ENCODE measurements at regions of chr5 and their contacts with region 1.

Region 1: DNA sequence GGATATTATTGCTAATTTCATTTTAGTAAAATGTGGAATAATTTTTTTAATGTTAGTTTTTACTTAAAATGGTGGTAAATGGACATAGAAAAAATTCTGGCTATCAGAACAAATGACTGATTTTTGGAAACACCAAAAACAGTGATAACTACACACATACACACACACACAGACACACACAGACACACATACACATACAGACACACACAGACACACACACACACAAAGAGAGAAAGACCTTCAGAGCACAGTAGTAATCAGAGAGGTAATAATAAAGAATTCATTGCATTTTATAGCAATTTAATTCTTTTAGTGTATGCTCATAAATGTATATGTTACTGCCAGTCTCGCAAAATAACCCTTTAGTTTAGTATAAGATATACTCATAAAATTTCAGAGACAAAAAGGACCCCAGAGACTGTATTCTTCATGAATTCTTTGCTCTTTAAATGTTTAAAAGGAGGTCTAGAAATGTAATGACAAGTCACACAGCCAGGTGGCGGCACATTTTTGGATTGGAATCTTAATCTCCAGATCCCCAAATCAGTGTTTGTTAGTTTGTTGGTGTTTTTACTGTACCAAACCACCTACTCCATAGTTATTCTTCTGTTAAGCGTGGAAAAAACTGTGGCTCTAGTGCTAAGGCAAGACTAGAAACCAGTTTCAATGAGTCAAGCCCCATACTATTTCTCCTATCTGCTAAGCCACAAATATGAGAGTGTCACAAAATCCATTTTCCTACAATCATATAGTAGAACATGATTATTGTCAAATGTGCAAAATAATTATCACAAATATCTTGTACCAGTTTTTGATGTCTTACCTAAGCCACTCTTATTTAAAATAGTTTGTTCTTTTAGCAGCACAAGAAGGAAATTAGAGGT is 109.9 kb downstream of the EDIL3 start:
- DNase-seq: peak; percentile 50
- H3K4me3 Mint-ChIP-seq: no peak overlapping the region
- H3K27ac Mint-ChIP-seq: no peak overlapping the region
- H3K4me1 Mint-ChIP-seq: no peaks in the 10 kb centered on the region
- H3K27me3 Mint-ChIP-seq: peaks cover 78% of the 10 kb centered on the region
- CTCF ChIP-seq: peak; percentile 58

Region 2: DNA sequence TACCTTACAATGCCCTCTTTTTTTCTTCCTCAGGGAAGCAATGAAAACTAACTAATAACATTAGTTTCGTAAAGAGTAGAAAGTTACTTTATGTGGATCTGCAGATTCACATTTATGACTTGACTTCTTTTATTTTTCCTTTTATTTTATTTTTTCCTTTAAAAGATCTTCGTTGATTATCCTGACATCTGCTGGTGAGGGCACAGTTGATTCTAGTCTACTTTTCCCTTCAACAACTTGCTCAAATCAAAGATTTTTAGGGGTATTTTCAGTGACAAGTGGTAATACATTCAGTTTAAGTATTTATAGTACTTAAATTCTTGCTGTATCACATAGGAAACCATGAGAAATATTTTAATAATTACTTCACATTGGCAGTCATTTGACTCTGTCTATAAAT is 104.9 kb after region 1 on chr5:
- CTCF ChIA-PET with region 1: no interaction called
- POLR2A ChIA-PET with region 1: no interaction called
- intact Hi-C with region 1: loop called (anchors 2 kb)
- DNase-seq: no peak
- H3K4me3 Mint-ChIP-seq: no peak overlapping the region
- H3K27ac Mint-ChIP-seq: no peak overlapping the region
- H3K4me1 Mint-ChIP-seq: peaks cover 17% of the 10 kb centered on the region
- H3K27me3 Mint-ChIP-seq: peaks cover 82% of the 10 kb centered on the region
- CTCF ChIP-seq: no peak

Region 3: DNA sequence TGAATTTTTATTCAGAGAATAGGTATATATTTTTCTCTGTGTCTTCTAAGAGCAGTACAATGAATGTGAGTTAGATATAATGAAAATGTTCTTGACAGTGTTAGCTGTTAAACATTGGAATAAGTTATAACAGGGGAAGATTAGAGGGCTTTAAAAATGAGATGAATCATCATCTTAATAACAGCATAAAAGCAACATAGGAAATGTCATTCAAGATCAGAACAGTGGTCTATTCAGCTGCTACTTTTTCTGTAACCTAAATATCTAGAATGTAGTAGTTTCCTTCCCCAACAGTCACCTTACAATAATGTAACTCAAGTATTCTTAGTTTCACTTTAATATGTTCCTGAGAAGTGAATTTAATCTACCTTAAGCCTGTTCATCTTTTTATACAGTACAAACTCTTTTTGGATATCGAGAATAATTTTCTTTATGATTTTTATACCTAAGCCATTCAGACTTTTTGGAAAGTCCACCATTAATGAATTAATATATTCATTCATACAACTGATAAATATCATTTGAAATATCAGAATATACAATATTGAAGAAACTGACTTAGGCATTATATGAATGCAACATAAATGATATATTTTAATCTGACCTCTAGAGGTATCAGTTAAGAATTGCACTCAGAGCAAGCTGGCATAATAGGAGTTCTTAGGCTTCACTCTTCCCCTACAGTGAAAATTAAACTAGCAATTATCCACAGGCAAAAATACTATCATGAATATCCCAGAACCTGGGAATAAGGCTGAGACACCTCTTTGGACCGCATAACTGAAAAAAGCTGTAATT is 176.0 kb after region 1 on chr5:
- CTCF ChIA-PET with region 1: interaction called, 6 read pairs
- POLR2A ChIA-PET with region 1: no interaction called
- intact Hi-C with region 1: loop called (anchors 1 kb)
- DNase-seq: peak; percentile 9
- H3K4me3 Mint-ChIP-seq: no peak overlapping the region
- H3K27ac Mint-ChIP-seq: no peak overlapping the region
- H3K4me1 Mint-ChIP-seq: no peaks in the 10 kb centered on the region
- H3K27me3 Mint-ChIP-seq: peaks cover 71% of the 10 kb centered on the region
- CTCF ChIP-seq: peak; percentile 23

Measured in MCF 10A (cell line).